PC-3 (cell line): ENCODE measurements at regions of chr17 and their contacts with region 1.

Region 1: DNA sequence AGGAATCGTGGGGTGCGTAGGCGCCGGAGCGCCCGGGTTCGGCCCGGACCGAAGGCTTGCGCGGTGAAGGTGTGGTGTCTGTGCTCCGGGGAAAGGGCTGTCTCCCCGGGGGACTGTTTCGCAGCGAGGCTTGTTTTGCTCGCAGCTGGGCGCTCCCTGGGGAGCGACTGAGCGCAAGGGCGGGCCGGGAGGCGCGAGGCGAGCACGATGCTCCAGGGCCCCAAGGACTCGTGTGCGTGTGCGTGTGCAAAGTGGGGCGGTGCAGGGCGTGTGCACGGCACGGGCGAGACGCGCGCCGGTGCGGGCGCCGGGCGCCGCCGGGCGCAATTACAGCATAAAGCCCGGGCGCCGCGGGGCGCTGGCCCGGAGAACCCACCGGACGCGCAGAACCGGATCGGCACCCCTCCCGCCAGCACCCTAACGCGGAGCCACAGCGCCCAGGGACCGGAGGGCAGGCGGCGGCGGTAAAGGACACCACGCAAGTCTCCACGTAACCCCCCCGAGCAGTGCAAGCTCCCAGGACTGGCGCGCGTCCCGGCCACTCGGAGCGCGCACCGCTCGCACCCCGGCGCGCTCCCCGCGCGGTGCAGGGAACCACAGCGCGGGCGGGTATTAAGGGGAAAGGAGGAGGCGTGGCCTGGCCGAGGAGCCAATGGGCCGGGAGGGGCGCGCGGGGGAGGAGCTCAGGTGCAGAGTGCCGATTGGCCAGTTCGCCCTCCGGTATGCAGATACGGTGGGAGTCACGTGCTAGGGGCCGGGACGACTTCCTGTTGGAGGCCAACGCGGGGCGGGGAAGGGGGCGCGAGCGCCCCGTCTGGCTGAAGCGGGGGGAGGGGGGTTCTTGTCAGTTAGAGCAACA is at the start of gene TNRC6C:
- DNase-seq: peak; percentile 97
- ATAC-seq: peak; percentile 94
- H3K4me3 ChIP-seq: peak within 1 kb of the TSS; percentile 63
- H3K27ac ChIP-seq: no peak within 1 kb of the TSS
- H3K4me1 ChIP-seq: peaks cover 10% of the 10 kb centered on the region; the same call in 1 of the 2 replicates
- H3K27me3 ChIP-seq: peaks cover 89% of the 10 kb centered on the region
- CTCF ChIP-seq: no peak
- total RNA-seq, gene TNRC6C: 5.3 and 6.0 TPM in 2 replicates

Region 2: GRCh38 chr17:77592106-77592865 is 365.8 kb before region 1 on chr17:
- CTCF ChIA-PET with region 1: no interaction called
- POLR2A ChIA-PET with region 1: interaction called, 10 read pairs
- intact Hi-C with region 1: no loop called
- DNase-seq: no peak
- ATAC-seq: no peak
- H3K4me3 ChIP-seq: no peak overlapping the region
- H3K27ac ChIP-seq: no peak overlapping the region
- H3K4me1 ChIP-seq: no peaks in the 10 kb centered on the region
- H3K27me3 ChIP-seq: peaks cover 79% of the 10 kb centered on the region
- CTCF ChIP-seq: no peak